ENCODE measurements at regions of chr12 and their contacts with region 1.

Region 1: GRCh38 chr12:106774005-106774807 is at the start of gene RIC8B:
- DNase-seq: peak; percentile 91
- H3K4me3 Mint-ChIP-seq: peak within 1 kb of the TSS; percentile 93
- H3K27ac Mint-ChIP-seq: peak within 1 kb of the TSS; percentile 98
- H3K4me1 Mint-ChIP-seq: peaks cover 22% of the 10 kb centered on the region
- H3K27me3 Mint-ChIP-seq: no peaks in the 10 kb centered on the region
- total RNA-seq, gene RIC8B: 9.7 to 9.9 TPM

Region 2: GRCh38 chr12:106302401-106303201 is 471.6 kb before region 1 on chr12 and contains the start of gene TCP11L2:
- CTCF ChIA-PET with region 1: no interaction called
- POLR2A ChIA-PET with region 1: no interaction called
- intact Hi-C with region 1: loop called (anchors 1 kb)
- DNase-seq: peak; percentile 91
- H3K4me3 Mint-ChIP-seq: peak within 1 kb of the TSS; percentile 89
- H3K27ac Mint-ChIP-seq: peak within 1 kb of the TSS; percentile 99
- H3K4me1 Mint-ChIP-seq: peaks cover 52% of the 10 kb centered on the region
- H3K27me3 Mint-ChIP-seq: no peaks in the 10 kb centered on the region
- total RNA-seq, gene TCP11L2: 8.8 to 10.3 TPM

Region 3: DNA sequence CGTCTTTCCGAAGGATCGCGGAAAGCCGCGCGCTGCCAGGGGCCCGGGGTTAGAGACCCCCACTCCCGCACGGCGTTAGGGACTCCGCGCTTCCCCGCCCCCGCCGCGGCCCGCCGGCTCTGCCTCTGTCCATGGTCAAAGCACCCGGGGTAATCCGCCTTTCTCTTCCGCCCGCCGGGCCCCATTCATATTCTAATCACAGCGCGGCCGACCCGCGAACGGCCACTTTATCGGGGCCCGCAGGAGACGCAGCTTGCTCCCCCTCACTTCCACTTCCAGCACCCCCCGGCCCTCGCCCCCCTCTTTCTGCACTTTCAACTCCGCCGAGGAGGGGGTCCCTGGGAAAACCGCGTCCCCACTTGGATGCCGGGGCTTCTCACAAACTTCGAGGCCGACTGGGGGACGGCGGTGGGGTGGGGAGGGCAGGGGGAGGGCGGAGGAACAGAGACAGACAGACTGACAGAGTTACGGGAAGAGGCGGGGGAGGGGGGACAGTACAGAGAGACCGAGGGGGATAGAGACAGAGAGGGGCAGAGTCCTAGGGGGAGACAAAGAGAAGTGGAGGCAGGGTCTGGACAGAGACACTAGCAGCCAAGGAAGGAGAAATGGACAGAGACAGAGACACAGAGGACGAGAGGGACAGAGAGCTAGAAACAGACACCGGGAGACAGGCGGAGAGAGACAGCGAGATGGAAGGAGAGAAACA is 192.5 kb before region 1 on chr12:
- CTCF ChIA-PET with region 1: no interaction called
- POLR2A ChIA-PET with region 1: no interaction called
- intact Hi-C with region 1: loop called (anchors 10 kb)
- DNase-seq: no peak
- H3K4me3 Mint-ChIP-seq: no peak overlapping the region
- H3K27ac Mint-ChIP-seq: no peak overlapping the region
- H3K4me1 Mint-ChIP-seq: peaks cover 38% of the 10 kb centered on the region
- H3K27me3 Mint-ChIP-seq: peaks cover 67% of the 10 kb centered on the region

Region 4: DNA sequence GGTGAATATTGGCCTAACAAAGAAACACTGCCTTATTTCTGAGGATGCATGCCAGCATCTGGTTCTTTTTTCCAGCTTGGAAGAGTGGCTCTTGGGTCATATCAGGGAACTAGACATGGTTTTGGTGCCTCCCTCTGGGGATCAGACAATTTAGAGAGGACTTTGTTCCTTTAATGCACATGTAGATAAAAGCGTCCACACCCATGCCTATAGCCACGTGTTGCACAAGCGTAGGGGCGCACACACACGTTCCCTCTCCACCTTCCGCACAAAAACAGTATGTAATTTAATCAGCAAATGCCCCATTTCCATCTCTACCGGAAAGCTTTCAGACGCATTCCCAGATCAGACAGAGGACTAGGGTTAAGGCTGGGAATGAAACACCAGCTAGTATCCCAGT is 61.4 kb before region 1 on chr12:
- CTCF ChIA-PET with region 1: no interaction called
- POLR2A ChIA-PET with region 1: no interaction called
- intact Hi-C with region 1: no loop called
- DNase-seq: no peak
- H3K4me3 Mint-ChIP-seq: no peak overlapping the region
- H3K27ac Mint-ChIP-seq: no peak overlapping the region
- H3K4me1 Mint-ChIP-seq: no peaks in the 10 kb centered on the region
- H3K27me3 Mint-ChIP-seq: no peaks in the 10 kb centered on the region

Region 5: DNA sequence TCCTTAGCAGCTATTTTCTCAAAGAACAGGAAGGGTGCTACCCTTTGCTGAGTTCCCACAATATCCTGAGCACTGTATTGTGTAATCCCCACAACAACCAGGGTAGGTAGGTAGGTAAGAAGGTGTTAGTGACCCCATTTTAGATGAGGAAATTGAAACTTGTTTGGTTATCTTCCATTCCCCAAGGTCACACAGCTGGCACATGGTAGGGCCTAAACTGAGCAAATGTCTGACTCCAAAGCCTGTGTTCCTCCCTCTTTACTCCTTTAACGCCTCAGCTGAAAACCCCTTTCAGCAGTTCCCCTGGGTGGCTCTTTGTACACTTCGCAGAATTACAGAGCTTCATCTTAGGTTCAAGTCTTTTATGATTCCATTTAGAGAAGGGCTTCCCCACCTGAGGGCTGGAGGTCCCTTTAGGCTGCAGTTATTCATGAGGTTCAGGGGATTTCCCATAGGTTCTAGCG is 26.2 kb before region 1 on chr12:
- CTCF ChIA-PET with region 1: interaction called, 3 read pairs
- POLR2A ChIA-PET with region 1: interaction called, 6 read pairs
- intact Hi-C with region 1: loop called (anchors 1 kb)
- DNase-seq: peak; percentile 34
- H3K4me3 Mint-ChIP-seq: no peak overlapping the region
- H3K27ac Mint-ChIP-seq: peak overlapping the region; percentile 83
- H3K4me1 Mint-ChIP-seq: peaks cover 38% of the 10 kb centered on the region
- H3K27me3 Mint-ChIP-seq: no peaks in the 10 kb centered on the region

Region 6: DNA sequence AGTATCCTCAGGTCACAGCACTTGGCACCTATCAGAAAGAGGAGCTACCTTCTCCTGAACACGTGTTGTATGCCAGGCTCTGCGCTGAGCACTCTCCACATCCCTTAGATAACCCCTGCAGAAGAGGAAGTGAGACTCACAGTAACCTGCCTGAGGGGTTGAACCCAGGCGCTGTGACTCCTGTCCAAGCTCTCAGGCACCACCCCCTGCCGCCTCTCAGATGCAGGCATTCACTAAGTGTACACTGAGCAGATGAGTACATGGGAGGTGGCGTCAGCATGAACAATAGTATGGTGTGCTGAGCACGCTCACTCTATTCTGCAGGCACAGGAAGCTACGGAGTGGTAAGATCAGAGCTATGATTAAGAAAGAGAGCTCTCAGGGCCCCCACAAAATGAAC is 20.7 kb before region 1 on chr12:
- CTCF ChIA-PET with region 1: interaction called, 3 read pairs
- POLR2A ChIA-PET with region 1: interaction called, 6 read pairs
- intact Hi-C with region 1: loop called (anchors 1 kb)
- DNase-seq: peak; percentile 89
- H3K4me3 Mint-ChIP-seq: peak overlapping the region; percentile 39
- H3K27ac Mint-ChIP-seq: peak overlapping the region; percentile 70
- H3K4me1 Mint-ChIP-seq: peaks cover 33% of the 10 kb centered on the region
- H3K27me3 Mint-ChIP-seq: no peaks in the 10 kb centered on the region

Region 7: GRCh38 chr12:106819991-106820390 is 45.8 kb after region 1 on chr12:
- CTCF ChIA-PET with region 1: no interaction called
- POLR2A ChIA-PET with region 1: no interaction called
- intact Hi-C with region 1: loop called (anchors 2 kb)
- DNase-seq: no peak
- H3K4me3 Mint-ChIP-seq: no peak overlapping the region
- H3K27ac Mint-ChIP-seq: no peak overlapping the region
- H3K4me1 Mint-ChIP-seq: peaks cover 18% of the 10 kb centered on the region
- H3K27me3 Mint-ChIP-seq: no peaks in the 10 kb centered on the region

Region 8: GRCh38 chr12:106955377-106956047 is 181.3 kb after region 1 on chr12 and contains the start of gene TMEM263:
- CTCF ChIA-PET with region 1: no interaction called
- POLR2A ChIA-PET with region 1: no interaction called
- intact Hi-C with region 1: loop called (anchors 1 kb)
- DNase-seq: peak; percentile 94
- H3K4me3 Mint-ChIP-seq: peak within 1 kb of the TSS; percentile 96
- H3K27ac Mint-ChIP-seq: peak within 1 kb of the TSS; percentile 86
- H3K4me1 Mint-ChIP-seq: peaks cover 16% of the 10 kb centered on the region
- H3K27me3 Mint-ChIP-seq: no peaks in the 10 kb centered on the region
- total RNA-seq, gene TMEM263: 37.8 to 38.3 TPM

Measured in activated CD4-positive, alpha-beta memory T cell treated with anti-CD3 and anti-CD28 coated beads for 36 hours (primary cell).